Caco-2 (cell line): ENCODE measurements at regions of chr1 and their contacts with region 1.

Region 1: GRCh38 chr1:67535474-67535873 is 105.3 kb upstream of the SERBP1 start:
- DNase-seq: peak; percentile 75 to 80
- H3K4me3 ChIP-seq: no peak overlapping the region
- H3K4me3 Mint-ChIP-seq: no peak overlapping the region
- H3K27ac Mint-ChIP-seq: no peak overlapping the region
- H3K4me1 ChIP-seq: peaks cover 29% of the 10 kb centered on the region
- H3K4me1 Mint-ChIP-seq: peaks cover 18% of the 10 kb centered on the region
- H3K27me3 ChIP-seq: no peaks in the 10 kb centered on the region
- H3K27me3 Mint-ChIP-seq: no peaks in the 10 kb centered on the region
- CTCF ChIP-seq: peak; percentile 79 to 81

Region 2: DNA sequence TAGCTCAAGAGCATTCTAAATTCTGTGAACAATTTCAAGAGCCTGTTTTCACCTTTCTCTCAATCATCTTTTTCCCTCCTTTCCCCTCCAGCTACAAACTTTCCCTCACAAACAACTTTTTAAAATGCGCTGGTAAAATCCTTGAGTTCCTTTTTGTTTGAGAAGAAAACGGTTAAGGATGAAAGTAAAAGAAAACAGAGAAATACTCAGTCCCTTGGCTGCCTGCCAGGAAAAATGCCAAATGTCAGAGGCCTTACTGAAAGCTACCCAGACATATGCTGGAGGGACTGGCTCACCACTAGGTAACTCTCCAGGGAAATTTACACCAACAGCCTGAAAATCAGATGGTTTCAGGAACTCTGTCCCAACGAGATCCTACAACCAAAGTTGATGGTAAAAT is 94.3 kb before region 1 on chr1:
- CTCF ChIA-PET with region 1: no interaction called
- POLR2A ChIA-PET with region 1: no interaction called
- intact Hi-C with region 1: no loop called
- DNase-seq: no peak
- H3K4me3 ChIP-seq: no peak overlapping the region
- H3K4me3 Mint-ChIP-seq: no peak overlapping the region
- H3K27ac Mint-ChIP-seq: no peak overlapping the region
- H3K4me1 ChIP-seq: peaks cover 25% of the 10 kb centered on the region
- H3K4me1 Mint-ChIP-seq: peaks cover 20% of the 10 kb centered on the region
- H3K27me3 ChIP-seq: no peaks in the 10 kb centered on the region
- H3K27me3 Mint-ChIP-seq: no peaks in the 10 kb centered on the region
- CTCF ChIP-seq: no peak

Region 3: DNA sequence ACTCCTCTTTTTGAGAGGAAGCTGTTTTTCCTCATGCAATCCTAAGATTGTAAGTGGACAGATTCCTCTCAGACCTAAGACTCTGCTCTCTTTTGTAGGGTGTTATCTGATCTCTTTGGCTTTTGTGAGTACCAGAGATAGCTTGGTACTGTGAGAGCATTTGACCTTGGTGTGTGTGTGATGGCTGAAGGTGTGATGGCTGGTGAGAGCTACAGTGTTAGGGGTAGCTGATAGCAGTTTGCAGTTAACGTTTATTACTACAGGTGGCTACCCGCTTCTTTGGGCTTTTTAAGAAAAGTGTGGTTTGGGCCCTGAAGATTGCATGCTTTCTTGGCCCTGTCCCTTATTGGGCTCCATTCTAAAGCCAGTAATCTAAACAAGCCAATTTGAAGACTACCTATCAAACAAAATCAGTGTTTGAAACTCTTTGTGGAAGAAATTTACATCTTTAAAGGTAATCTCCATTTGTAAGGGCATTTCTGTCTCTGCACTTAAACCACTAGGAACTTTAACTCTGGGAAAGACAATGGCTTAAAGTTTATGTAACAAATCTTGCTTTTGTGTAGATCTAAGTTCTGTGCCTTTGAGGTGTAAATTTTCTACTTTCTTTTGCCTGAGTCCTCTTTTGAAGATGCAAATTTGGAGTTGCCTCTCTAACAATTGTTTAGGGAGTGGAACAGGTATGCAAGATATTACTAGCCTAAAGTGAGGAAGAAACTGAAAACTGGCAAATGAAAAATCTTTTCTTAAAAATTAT is 20.0 kb before region 1 on chr1:
- CTCF ChIA-PET with region 1: no interaction called
- POLR2A ChIA-PET with region 1: no interaction called
- intact Hi-C with region 1: loop called (anchors 2 kb)
- DNase-seq: no peak
- H3K4me3 ChIP-seq: no peak overlapping the region
- H3K4me3 Mint-ChIP-seq: no peak overlapping the region
- H3K27ac Mint-ChIP-seq: peak overlapping the region; percentile 45
- H3K4me1 ChIP-seq: peaks cover 25% of the 10 kb centered on the region
- H3K4me1 Mint-ChIP-seq: no peaks in the 10 kb centered on the region
- H3K27me3 ChIP-seq: no peaks in the 10 kb centered on the region
- H3K27me3 Mint-ChIP-seq: no peaks in the 10 kb centered on the region
- CTCF ChIP-seq: no peak

Region 4: DNA sequence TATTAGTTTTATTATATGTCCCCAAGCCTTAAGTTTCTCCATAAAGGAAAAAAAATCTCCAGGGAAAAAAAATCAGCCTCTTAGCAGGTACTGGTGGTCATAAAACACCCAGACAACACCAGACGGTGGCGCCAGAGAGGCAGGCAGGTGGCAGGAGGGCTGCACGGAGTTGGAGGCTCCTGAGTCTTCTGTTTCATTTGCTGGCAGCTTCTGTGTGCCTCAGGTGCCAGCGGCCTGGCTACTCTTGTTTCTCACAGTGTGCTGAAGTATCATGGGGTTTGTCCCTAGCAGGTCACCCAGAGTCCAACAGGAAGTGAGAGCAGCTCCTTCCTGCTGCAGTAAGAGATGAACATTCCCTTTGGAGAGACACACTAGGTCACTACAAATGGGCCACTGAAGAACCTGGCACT is 26.2 kb after region 1 on chr1:
- CTCF ChIA-PET with region 1: interaction called, 5 read pairs
- POLR2A ChIA-PET with region 1: no interaction called
- intact Hi-C with region 1: loop called (anchors 1 kb)
- DNase-seq: peak; percentile 90 to 92
- H3K4me3 ChIP-seq: no peak overlapping the region
- H3K4me3 Mint-ChIP-seq: no peak overlapping the region
- H3K27ac Mint-ChIP-seq: no peak overlapping the region
- H3K4me1 ChIP-seq: peaks cover 16% of the 10 kb centered on the region; the same call in 1 of the 2 replicates
- H3K4me1 Mint-ChIP-seq: no peaks in the 10 kb centered on the region
- H3K27me3 ChIP-seq: no peaks in the 10 kb centered on the region
- H3K27me3 Mint-ChIP-seq: no peaks in the 10 kb centered on the region
- CTCF ChIP-seq: peak; percentile 73 to 77

Region 5: GRCh38 chr1:67748630-67749029 is 213.2 kb after region 1 on chr1:
- CTCF ChIA-PET with region 1: interaction called, 3 read pairs
- POLR2A ChIA-PET with region 1: no interaction called
- intact Hi-C with region 1: loop called (anchors 5 kb)
- DNase-seq: peak; percentile 42 to 51
- H3K4me3 ChIP-seq: peak overlapping the region; percentile 9
- H3K4me3 Mint-ChIP-seq: peak overlapping the region; percentile 69
- H3K27ac Mint-ChIP-seq: peak overlapping the region; percentile 69
- H3K4me1 ChIP-seq: peaks cover 80% of the 10 kb centered on the region
- H3K4me1 Mint-ChIP-seq: peaks cover 30% of the 10 kb centered on the region
- H3K27me3 ChIP-seq: no peaks in the 10 kb centered on the region
- H3K27me3 Mint-ChIP-seq: no peaks in the 10 kb centered on the region
- CTCF ChIP-seq: no peak

Region 6: GRCh38 chr1:67760030-67760821 is 224.8 kb after region 1 on chr1:
- CTCF ChIA-PET with region 1: interaction called, 30 read pairs
- POLR2A ChIA-PET with region 1: interaction called, 6 read pairs
- intact Hi-C with region 1: loop called (anchors 1 kb)
- DNase-seq: peak; percentile 74 to 88
- H3K4me3 ChIP-seq: no peak overlapping the region
- H3K4me3 Mint-ChIP-seq: no peak overlapping the region
- H3K27ac Mint-ChIP-seq: peak overlapping the region; percentile 86
- H3K4me1 ChIP-seq: peaks cover 30% of the 10 kb centered on the region
- H3K4me1 Mint-ChIP-seq: peaks cover 7% of the 10 kb centered on the region
- H3K27me3 ChIP-seq: no peaks in the 10 kb centered on the region
- H3K27me3 Mint-ChIP-seq: no peaks in the 10 kb centered on the region
- CTCF ChIP-seq: peak; percentile 55 to 72

Region 7: GRCh38 chr1:67832737-67833601 is 297.5 kb after region 1 on chr1 and contains the start of gene GNG12:
- CTCF ChIA-PET with region 1: no interaction called
- POLR2A ChIA-PET with region 1: no interaction called
- intact Hi-C with region 1: loop called (anchors 5 kb)
- DNase-seq: peak; percentile 70 to 79
- H3K4me3 ChIP-seq: peak within 1 kb of the TSS; percentile 41
- H3K4me3 Mint-ChIP-seq: peak within 1 kb of the TSS; percentile 92
- H3K27ac Mint-ChIP-seq: peak within 1 kb of the TSS; percentile 79
- H3K4me1 ChIP-seq: peaks cover 3% of the 10 kb centered on the region
- H3K4me1 Mint-ChIP-seq: no peaks in the 10 kb centered on the region
- H3K27me3 ChIP-seq: no peaks in the 10 kb centered on the region
- H3K27me3 Mint-ChIP-seq: no peaks in the 10 kb centered on the region
- CTCF ChIP-seq: no peak
- total RNA-seq, gene GNG12: 12.0 and 12.5 TPM in 2 replicates

Region 8: GRCh38 chr1:67853704-67854103 is 318.2 kb after region 1 on chr1:
- CTCF ChIA-PET with region 1: no interaction called
- POLR2A ChIA-PET with region 1: no interaction called
- intact Hi-C with region 1: loop called (anchors 5 kb)
- DNase-seq: peak; percentile 51 to 69
- H3K4me3 ChIP-seq: no peak overlapping the region
- H3K4me3 Mint-ChIP-seq: no peak overlapping the region
- H3K27ac Mint-ChIP-seq: no peak overlapping the region
- H3K4me1 ChIP-seq: no peaks in the 10 kb centered on the region
- H3K4me1 Mint-ChIP-seq: no peaks in the 10 kb centered on the region
- H3K27me3 ChIP-seq: no peaks in the 10 kb centered on the region
- H3K27me3 Mint-ChIP-seq: peaks cover 11% of the 10 kb centered on the region
- CTCF ChIP-seq: peak; percentile 78 to 79